ENCODE measurements at regions of chr11 and their contacts with region 1.

Region 1: DNA sequence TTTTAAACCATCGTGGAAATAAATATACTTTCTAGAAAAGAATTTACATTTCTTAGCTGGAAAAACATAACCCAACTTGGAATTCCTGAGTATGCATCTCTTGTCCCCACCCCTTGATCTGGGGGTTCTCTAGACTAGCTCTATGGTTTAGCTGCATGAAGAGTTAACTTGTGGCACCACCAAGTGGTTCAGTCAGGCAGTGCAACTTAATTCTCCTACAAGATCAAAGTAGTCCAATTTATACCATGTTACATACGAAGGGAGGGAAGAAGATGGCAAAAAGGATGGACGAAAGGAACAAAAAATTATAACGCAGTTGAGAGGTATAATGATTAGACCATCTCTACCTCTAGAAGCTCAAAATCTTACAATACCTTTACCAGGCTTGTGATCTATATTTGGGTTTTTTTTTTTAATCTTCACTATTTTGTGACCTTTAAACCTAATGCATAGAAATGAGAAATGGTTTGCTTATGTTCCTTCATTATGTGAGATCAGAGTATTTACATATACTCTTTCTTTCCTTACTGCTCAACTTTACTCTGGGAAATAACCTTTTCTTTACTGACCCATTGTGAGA is 28.5 kb upstream of the ALKBH3 start:
- DNase-seq: peak; percentile 67
- ATAC-seq: peak; percentile 91
- H3K4me3 ChIP-seq: no peak overlapping the region
- H3K27ac ChIP-seq: no peak overlapping the region
- H3K4me1 ChIP-seq: no peaks in the 10 kb centered on the region
- H3K27me3 ChIP-seq: no peaks in the 10 kb centered on the region
- CTCF ChIP-seq: peak; percentile 69 to 94 (median 73); a peak in 5 of 6 replicates
- POLR2A ChIP-seq: no peak
- RAD21 ChIP-seq: peak; percentile 85

Region 2: GRCh38 chr11:43504316-43504950 is 347.7 kb before region 1 on chr11:
- CTCF ChIA-PET with region 1: interaction called, 40 read pairs
- POLR2A ChIA-PET with region 1: no interaction called
- RAD21 ChIA-PET with region 1: no interaction called
- intact Hi-C with region 1: loop called (anchors 1 kb)
- DNase-seq: peak; percentile 12
- ATAC-seq: peak; percentile 83
- H3K4me3 ChIP-seq: no peak overlapping the region
- H3K27ac ChIP-seq: no peak overlapping the region
- H3K4me1 ChIP-seq: peaks cover 0 to 7% of the 10 kb centered on the region in 2 experiments; a peak in 1 of 4 replicates
- H3K27me3 ChIP-seq: peaks cover 8% of the 10 kb centered on the region; the same call in 1 of the 2 replicates
- CTCF ChIP-seq: peak; percentile 32 to 47 (median 45); a peak in 5 of 6 replicates
- POLR2A ChIP-seq: no peak
- RAD21 ChIP-seq: peak; percentile 60

Region 3: DNA sequence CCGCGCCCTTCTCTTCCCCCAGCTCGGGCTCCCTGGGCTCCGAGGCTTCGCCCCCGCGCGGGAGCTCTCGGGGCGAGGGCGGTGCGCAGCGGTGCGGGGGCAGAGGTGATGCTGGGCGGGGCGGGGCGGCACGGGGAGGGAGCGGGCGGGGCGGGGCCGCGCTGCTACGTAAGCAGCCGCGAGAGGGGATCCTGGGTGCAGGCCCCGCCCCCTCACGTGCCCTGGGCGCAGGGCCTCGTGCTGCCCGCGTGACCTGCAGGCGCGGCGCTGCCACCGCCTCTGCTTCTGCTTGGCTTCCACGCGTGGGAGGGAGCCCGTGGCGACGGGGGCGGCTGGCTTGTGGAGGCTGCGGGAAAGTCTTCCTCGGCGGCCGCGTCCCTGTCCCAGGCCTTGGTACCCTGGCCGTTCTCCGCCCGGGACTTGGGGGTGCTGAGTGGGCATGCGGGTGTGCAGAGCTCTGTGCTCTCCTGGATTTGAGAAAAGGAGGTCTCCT is 304.2 kb before region 1 on chr11:
- CTCF ChIA-PET with region 1: no interaction called
- POLR2A ChIA-PET with region 1: no interaction called
- RAD21 ChIA-PET with region 1: no interaction called
- intact Hi-C with region 1: no loop called
- DNase-seq: no peak
- ATAC-seq: no peak
- H3K4me3 ChIP-seq: no peak overlapping the region
- H3K27ac ChIP-seq: no peak overlapping the region
- H3K4me1 ChIP-seq: no peaks in the 10 kb centered on the region
- H3K27me3 ChIP-seq: peaks cover 6% of the 10 kb centered on the region; the same call in 1 of the 2 replicates
- CTCF ChIP-seq: no peak
- POLR2A ChIP-seq: no peak
- RAD21 ChIP-seq: no peak

Region 4: DNA sequence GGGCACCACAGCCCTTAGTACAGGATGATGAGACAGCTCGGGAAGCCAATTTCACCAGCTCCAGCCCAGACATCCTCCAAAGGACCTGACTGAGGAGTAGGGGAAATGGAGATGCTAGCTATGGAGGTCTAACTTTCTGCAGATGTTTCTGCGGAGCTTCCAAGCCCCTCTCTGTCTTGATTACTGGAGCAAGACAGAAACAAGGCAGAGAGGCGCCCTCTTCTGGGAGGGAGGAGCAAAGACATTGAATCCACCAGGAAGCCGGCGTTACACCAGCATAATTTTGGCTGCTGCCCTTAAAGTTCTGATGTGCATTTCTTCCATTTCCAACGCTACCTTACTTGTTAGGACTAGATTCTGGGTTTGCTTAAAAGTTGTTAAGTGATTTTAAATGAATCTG is 278.9 kb before region 1 on chr11:
- CTCF ChIA-PET with region 1: interaction called, 19 read pairs
- POLR2A ChIA-PET with region 1: no interaction called
- RAD21 ChIA-PET with region 1: interaction called in 1 of 2 experiments, 3 read pairs
- intact Hi-C with region 1: loop called (anchors 5 kb)
- DNase-seq: peak; percentile 16
- ATAC-seq: peak; percentile 80
- H3K4me3 ChIP-seq: no peak overlapping the region
- H3K27ac ChIP-seq: no peak overlapping the region
- H3K4me1 ChIP-seq: no peaks in the 10 kb centered on the region
- H3K27me3 ChIP-seq: peaks cover 42% of the 10 kb centered on the region
- CTCF ChIP-seq: peak; percentile 23 to 86 (median 71); a peak in 5 of 6 replicates
- POLR2A ChIP-seq: no peak
- RAD21 ChIP-seq: peak; percentile 49

Region 5: GRCh38 chr11:43802509-43802908 is 49.6 kb before region 1 on chr11:
- CTCF ChIA-PET with region 1: interaction called, 12 read pairs
- POLR2A ChIA-PET with region 1: no interaction called
- RAD21 ChIA-PET with region 1: interaction called in 1 of 2 experiments, 3 read pairs
- intact Hi-C with region 1: no loop called
- DNase-seq: no peak
- ATAC-seq: peak; percentile 65; the same call in 1 of the 2 replicates
- H3K4me3 ChIP-seq: no peak overlapping the region
- H3K27ac ChIP-seq: no peak overlapping the region
- H3K4me1 ChIP-seq: no peaks in the 10 kb centered on the region
- H3K27me3 ChIP-seq: no peaks in the 10 kb centered on the region
- CTCF ChIP-seq: peak in 2 of 3 experiments; percentile 48 to 55; a peak in 3 of 6 replicates
- POLR2A ChIP-seq: no peak
- RAD21 ChIP-seq: peak; percentile 31; the same call in 1 of the 2 replicates

Region 6: DNA sequence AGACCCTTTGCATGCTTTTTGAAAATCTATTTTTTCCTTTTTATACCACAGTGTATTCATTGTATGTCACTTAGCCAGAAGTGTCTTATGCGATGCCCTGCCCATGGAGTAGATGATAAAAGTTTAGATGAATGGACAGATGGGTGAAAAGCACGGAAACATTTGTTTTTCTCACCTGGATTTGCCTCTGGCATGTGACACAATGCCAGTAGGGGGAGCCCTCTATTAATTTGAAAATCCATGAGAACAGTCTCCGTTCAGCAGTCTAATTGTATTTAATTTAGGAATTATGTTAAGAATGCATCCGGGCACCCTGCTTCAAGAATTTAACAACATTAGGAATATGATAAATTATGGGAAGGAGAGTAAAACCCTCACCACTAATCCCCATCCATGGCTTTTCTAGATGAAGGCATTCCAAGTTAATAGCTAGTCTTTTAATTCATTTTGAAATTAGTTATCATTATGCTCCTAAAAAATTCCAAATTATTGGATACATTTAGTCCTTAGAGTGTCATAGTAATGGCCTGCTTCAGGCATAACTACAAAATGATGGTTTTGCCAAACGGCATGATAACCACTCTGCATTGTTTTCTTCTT is 26.8 kb before region 1 on chr11:
- CTCF ChIA-PET with region 1: interaction called, 31 read pairs
- POLR2A ChIA-PET with region 1: no interaction called
- RAD21 ChIA-PET with region 1: interaction called in 1 of 2 experiments, 5 read pairs
- intact Hi-C with region 1: loop called (anchors 1 kb)
- DNase-seq: peak; percentile 31
- ATAC-seq: peak; percentile 67
- H3K4me3 ChIP-seq: no peak overlapping the region
- H3K27ac ChIP-seq: no peak overlapping the region
- H3K4me1 ChIP-seq: peaks cover 10% of the 10 kb centered on the region in 2 experiments
- H3K27me3 ChIP-seq: no peaks in the 10 kb centered on the region
- CTCF ChIP-seq: peak; percentile 58 to 83 (median 75); a peak in 5 of 6 replicates
- POLR2A ChIP-seq: no peak
- RAD21 ChIP-seq: peak; percentile 73

Region 7: DNA sequence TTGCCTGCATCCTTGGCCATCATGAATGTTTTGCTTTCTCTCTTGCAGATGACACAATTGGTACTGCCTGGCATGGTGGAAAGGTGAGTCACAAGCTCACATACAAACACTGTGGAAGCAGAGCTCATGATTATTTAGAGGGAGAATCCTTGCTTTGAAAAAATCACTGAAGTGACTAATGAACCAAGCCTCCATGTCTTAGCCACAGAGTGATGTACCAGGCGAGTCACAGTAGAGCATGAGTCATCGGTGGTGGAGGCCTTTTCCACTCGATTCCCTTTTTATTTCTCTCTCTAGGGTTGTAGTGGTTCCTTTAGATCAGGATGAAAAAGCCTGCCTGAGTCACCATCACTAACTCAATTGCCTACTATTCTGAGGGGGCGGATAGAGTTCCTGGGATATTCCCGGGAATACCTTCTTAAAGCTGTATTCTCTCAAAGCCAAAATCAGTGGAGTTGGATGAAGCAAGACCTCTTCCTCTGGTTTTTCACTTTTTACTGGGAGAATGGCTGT is 21.2 kb before region 1 on chr11:
- CTCF ChIA-PET with region 1: interaction called, 31 read pairs
- POLR2A ChIA-PET with region 1: no interaction called
- RAD21 ChIA-PET with region 1: interaction called in 1 of 2 experiments, 3 read pairs
- intact Hi-C with region 1: no loop called
- DNase-seq: peak; percentile 98
- ATAC-seq: peak; percentile 95
- H3K4me3 ChIP-seq: peak overlapping the region in 1 of 2 experiments; percentile 28; a peak in 2 of 4 replicates
- H3K27ac ChIP-seq: peak overlapping the region; percentile 44; the same call in 1 of the 2 replicates
- H3K4me1 ChIP-seq: peaks cover 24 to 44% of the 10 kb centered on the region in 2 experiments
- H3K27me3 ChIP-seq: no peaks in the 10 kb centered on the region
- CTCF ChIP-seq: no peak
- POLR2A ChIP-seq: no peak
- RAD21 ChIP-seq: 0 out of 2 replicates have a peak, but pooled peaks have one; percentile 10

Region 8: GRCh38 chr11:43837879-43838278 is 14.3 kb before region 1 on chr11:
- CTCF ChIA-PET with region 1: interaction called, 10 read pairs
- POLR2A ChIA-PET with region 1: no interaction called
- RAD21 ChIA-PET with region 1: interaction called in 1 of 2 experiments, 3 read pairs
- intact Hi-C with region 1: no loop called
- DNase-seq: no peak
- ATAC-seq: no peak
- H3K4me3 ChIP-seq: no peak overlapping the region
- H3K27ac ChIP-seq: no peak overlapping the region
- H3K4me1 ChIP-seq: peaks cover 0 to 8% of the 10 kb centered on the region in 2 experiments; a peak in 3 of 4 replicates
- H3K27me3 ChIP-seq: no peaks in the 10 kb centered on the region
- CTCF ChIP-seq: no peak
- POLR2A ChIP-seq: no peak
- RAD21 ChIP-seq: no peak

Measured in HCT116 (cell line).